ENCODE measurements at regions of chr1 and their contacts with region 1.

Region 1: DNA sequence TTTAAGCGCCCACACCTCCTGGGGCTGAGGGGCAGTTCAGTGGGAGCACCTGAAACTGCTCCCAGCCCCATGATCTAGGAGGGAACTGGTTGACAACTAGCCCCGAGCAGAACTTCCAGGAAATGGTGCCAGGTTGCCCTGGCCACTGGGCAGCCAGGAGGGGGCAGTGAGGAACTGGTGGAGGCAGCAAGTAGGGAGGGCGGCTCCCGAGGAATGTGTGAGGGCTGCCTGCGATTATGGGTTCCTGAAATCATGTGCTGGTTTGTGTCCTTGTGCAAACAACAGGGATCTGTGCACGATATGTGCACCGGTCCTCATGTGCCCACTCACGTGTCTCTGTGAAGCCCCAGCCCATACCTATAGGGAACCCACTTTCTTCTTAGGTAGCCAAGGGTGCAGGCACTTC is 9.9 kb downstream of the GPR3 start:
- DNase-seq: peak in 1 of 2 experiments; percentile 76
- H3K4me3 ChIP-seq: no peak overlapping the region
- H3K27ac ChIP-seq: peak overlapping the region; percentile 1; the same call in 1 of the 2 replicates
- H3K4me1 ChIP-seq: peaks cover 13 to 48% (median 22%) of the 10 kb centered on the region in 4 experiments
- H3K27me3 ChIP-seq: no peaks in the 10 kb centered on the region
- CTCF ChIP-seq: peak; percentile 63 to 85 (median 84)
- EP300 ChIP-seq: no peak
- POLR2A ChIP-seq: 0 out of 3 replicates have a peak, but pooled peaks of 1 of the 2 experiments have one; percentile 46
- RAD21 ChIP-seq: peak; percentile 62 to 69

Region 2: DNA sequence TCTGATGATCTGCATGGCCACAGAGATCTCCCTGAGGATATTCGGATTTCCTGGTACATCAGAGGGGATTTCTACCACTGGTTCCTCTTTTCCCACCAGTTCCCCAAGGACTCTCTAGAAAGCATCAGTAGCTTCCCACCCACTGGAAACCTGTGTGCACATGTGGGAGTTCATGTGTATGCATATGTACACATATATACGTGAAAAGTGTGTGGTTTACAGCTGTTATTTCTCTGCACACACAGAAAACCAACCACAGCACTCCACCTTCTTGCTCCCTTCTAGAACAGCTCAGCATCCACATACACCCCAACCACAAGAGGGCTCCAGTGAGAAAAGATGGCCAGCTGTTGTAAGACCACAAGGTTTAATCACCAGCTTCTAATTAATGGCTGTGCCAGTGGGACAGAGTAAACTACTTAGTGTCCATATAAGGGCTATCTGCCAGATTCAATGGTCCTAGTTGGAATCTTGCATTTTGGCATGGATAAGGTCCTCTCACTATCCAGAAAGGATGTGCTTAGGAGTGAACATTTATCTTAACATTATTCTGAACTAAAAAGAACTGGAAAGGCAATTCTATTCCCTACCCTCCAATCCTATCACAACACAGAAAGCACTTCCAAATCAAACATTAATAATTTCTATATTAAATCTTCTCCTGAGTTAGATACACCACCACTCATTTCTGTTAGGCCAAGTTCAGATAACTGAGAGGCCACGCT is 14.2 kb after region 1 on chr1:
- CTCF ChIA-PET with region 1: interaction called, 119 read pairs
- POLR2A ChIA-PET with region 1: interaction called, 5 read pairs
- DNase-seq: no peak
- H3K4me3 ChIP-seq: no peak overlapping the region
- H3K27ac ChIP-seq: no peak overlapping the region
- H3K4me1 ChIP-seq: peaks cover 5 to 12% (median 9%) of the 10 kb centered on the region in 4 experiments; a peak in 6 of 7 replicates
- H3K27me3 ChIP-seq: no peaks in the 10 kb centered on the region
- CTCF ChIP-seq: peak; percentile 46 to 90 (median 79)
- EP300 ChIP-seq: no peak
- POLR2A ChIP-seq: no peak
- RAD21 ChIP-seq: peak; percentile 70 to 80

Region 3: GRCh38 chr1:27423709-27424108 is 21.4 kb after region 1 on chr1:
- CTCF ChIA-PET with region 1: interaction called, 119 read pairs
- POLR2A ChIA-PET with region 1: interaction called, 3 read pairs
- DNase-seq: no peak
- H3K4me3 ChIP-seq: no peak overlapping the region
- H3K27ac ChIP-seq: no peak overlapping the region
- H3K4me1 ChIP-seq: peaks cover 8 to 20% (median 16%) of the 10 kb centered on the region in 4 experiments
- H3K27me3 ChIP-seq: no peaks in the 10 kb centered on the region
- CTCF ChIP-seq: no peak
- EP300 ChIP-seq: no peak
- POLR2A ChIP-seq: no peak
- RAD21 ChIP-seq: no peak

Region 4: DNA sequence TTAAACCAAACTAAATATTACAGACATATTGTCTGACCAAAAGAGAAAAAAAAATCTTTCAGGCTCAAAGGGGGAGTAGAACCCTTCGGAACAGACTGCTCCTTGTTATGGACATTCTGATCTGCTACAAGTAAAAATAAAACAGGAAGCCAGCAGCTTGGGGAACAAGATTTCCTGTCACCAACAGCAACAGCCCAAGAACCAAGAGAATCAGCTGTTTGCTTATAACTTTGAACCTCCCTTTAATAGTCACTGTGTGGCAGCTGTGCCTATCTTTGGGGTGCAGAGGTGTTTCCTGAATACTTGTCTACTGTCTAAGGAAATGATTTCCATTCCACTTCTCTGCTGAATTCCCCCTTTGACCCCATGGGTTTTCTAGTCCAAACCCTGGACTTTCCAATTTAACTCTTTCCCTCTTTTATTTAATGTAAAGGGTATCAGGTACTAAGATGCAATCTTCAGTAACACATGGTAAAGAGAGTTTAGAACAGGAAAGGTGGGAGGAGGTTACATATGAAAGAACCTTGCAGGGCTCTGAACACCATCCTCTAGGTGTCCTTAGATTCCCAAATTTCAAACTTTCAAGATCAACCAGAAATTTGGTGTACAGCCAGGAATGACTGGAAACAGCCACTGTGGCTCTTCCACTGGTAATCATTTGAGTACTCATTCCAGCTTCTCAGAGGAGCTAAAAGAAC is 28.7 kb after region 1 on chr1:
- CTCF ChIA-PET with region 1: interaction called, 13 read pairs
- POLR2A ChIA-PET with region 1: interaction called, 4 read pairs
- DNase-seq: no peak
- H3K4me3 ChIP-seq: no peak overlapping the region
- H3K27ac ChIP-seq: peak overlapping the region; percentile 25; the same call in 1 of the 2 replicates
- H3K4me1 ChIP-seq: peaks cover 14 to 29% (median 22%) of the 10 kb centered on the region in 4 experiments
- H3K27me3 ChIP-seq: no peaks in the 10 kb centered on the region
- CTCF ChIP-seq: no peak
- EP300 ChIP-seq: no peak
- POLR2A ChIP-seq: no peak
- RAD21 ChIP-seq: no peak

Region 5: DNA sequence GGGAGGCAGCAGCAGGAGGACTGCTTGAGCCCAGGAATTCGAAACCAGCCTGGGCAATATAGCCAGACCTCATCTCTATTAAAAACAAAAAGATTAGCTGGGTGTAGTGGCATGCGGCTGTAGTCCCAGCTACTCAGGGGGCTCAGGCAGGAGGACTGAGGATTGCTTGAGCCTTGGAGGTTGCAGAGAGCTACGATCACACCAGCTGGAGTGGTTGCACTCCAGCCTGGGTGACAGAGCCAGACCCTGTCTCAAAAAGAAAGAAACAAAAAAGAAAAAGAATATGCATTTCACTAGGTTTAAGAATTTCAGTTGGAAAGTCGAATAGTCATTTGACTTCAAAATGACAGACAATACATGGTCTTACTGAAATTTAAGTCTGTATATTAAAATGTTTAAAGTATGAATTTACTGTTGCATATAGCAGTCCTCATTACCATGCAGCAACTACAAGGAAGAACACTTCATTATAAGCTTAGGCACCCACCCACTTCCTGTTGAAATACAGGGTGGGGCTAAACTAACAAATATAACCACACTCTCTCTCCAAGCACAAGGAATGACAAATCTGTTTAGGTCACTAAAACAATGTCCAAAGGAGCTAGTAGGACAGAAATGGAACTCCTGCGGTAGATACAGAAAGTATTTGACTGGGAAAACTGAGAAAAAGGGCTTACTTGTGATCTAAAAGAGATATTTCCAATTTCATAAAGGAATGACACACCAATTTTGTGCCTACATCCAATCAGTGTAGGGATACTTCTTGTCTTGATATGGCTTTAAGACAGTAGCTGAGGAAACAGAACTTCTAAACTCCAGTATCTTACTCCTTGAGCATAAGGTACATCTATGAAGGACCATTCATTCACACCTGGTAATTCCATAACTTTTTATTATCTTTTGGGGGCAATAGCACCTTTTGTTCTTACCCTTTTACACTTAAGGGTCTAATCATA is 34.1 kb after region 1 on chr1:
- CTCF ChIA-PET with region 1: interaction called, 16 read pairs
- POLR2A ChIA-PET with region 1: interaction called, 3 read pairs
- DNase-seq: no peak
- H3K4me3 ChIP-seq: no peak overlapping the region
- H3K27ac ChIP-seq: no peak overlapping the region
- H3K4me1 ChIP-seq: peaks cover 2 to 14% (median 5%) of the 10 kb centered on the region in 4 experiments; a peak in 5 of 7 replicates
- H3K27me3 ChIP-seq: no peaks in the 10 kb centered on the region
- CTCF ChIP-seq: no peak
- EP300 ChIP-seq: no peak
- POLR2A ChIP-seq: no peak
- RAD21 ChIP-seq: no peak